Activated CD4-positive, alpha-beta memory T cell treated with anti-CD3 and anti-CD28 coated beads for 36 hours (primary cell): ENCODE measurements at regions of chr16 and their contacts with region 1.

Region 1: GRCh38 chr16:25177831-25178688 is 38.7 kb upstream of the AQP8 start:
- DNase-seq: no peak
- H3K4me3 Mint-ChIP-seq: no peak overlapping the region
- H3K27ac Mint-ChIP-seq: no peak overlapping the region
- H3K4me1 Mint-ChIP-seq: peaks cover 13% of the 10 kb centered on the region
- H3K27me3 Mint-ChIP-seq: no peaks in the 10 kb centered on the region

Region 2: DNA sequence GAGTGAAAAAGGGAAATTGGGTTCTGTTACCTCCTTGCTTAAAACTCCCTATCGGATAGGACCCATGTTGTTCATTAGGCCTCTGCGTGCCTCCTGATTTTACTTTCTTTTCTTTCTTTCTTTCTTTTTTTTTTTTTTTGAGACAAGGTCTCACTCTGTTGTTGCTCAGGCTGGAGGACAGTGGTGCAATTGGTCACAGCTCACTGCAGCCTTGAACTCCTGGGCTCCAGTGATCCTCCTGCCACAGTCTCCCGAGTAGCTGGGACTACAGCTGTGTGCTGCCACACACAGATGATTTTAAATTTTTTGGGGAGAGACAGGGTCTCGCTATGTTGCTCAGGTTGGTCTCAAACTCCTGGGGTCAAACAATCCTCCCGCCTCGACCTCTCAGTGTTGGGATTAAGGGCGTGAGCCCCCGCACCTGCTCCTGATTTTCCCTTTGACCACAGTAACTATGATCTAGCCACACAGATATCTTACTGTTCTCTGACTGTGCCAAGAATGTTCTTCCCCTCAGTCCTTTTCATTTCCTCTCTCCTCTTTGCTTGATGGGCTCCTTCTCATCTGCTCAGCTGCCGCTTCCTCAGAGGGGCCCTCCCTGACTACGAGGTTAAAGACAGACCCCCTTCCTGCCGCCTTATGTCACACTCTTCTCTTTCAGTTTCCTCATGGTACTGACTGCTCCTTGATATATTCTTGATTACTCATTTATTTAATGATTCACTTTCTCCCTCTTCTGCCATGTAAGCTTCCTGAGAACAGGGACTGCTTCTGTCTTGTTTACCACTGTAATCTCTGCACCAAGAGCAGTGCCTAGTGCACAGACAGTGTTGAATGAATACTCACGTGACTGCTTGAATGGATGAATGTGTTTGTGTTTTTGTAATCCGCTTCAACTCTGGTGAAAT is 22.3 kb before region 1 on chr16:
- CTCF ChIA-PET with region 1: no interaction called
- POLR2A ChIA-PET with region 1: interaction called, 3 read pairs
- intact Hi-C with region 1: loop called (anchors 1 kb)
- DNase-seq: peak; percentile 65
- H3K4me3 Mint-ChIP-seq: no peak overlapping the region
- H3K27ac Mint-ChIP-seq: peak overlapping the region; percentile 76
- H3K4me1 Mint-ChIP-seq: peaks cover 13% of the 10 kb centered on the region
- H3K27me3 Mint-ChIP-seq: no peaks in the 10 kb centered on the region